CD4-positive, alpha-beta memory T cell (primary cell): ENCODE measurements at regions of chrX and their contacts with region 1.

Region 1: DNA sequence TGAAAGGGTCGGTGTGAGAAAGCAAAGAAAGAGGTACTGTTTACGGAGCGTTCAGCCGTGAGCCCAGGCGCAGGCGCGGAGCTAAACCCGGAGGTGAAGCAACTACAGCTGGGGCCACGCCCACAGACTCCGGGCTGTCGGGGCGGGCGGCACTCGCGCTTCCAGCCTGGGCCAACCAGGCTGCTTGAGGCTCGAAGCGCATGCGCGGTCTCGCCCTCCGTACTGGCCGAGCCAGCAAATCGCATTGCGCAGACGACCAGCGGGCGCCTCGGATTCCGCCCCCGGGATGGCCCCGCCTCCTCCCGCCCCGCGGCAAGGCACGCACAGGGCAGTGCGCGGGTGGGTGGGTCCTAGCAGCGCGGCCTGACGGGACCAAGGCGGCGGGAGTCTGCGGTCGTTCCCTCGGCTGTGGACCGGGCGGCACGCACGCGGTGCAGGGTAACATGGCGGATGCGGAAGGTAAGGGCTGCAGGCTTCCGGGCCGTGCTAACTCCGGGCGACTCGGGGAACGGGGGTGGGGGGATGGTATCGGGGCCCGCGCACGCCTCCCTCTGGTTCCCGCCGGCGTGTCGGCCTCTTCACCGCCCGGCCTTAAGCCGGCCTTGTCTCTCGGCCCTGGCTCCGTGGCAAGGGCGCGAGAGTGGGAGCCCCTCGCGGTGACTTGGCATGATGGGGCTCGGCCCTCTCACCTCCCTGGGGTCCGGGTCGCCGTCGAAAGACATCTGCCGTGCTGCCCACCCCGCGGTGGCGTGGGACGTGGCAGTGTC is at the start of gene DKC1:
- DNase-seq: peak; percentile 91 to 96 (median 95)
- H3K4me3 ChIP-seq: peak within 1 kb of the TSS; percentile 60 to 61
- H3K4me3 Mint-ChIP-seq: peak within 1 kb of the TSS; percentile 84 to 93 (median 88)
- H3K27ac ChIP-seq: peak within 1 kb of the TSS; percentile 71
- H3K27ac Mint-ChIP-seq: peak within 1 kb of the TSS; percentile 90 to 96 (median 94)
- H3K4me1 ChIP-seq: peaks cover 18% of the 10 kb centered on the region
- H3K4me1 Mint-ChIP-seq: peaks cover 10 to 25% (median 18%) of the 10 kb centered on the region in 4 donors
- H3K27me3 ChIP-seq: no peaks in the 10 kb centered on the region
- H3K27me3 Mint-ChIP-seq: no peaks in the 10 kb centered on the region
- total RNA-seq, gene DKC1: 60.0 to 63.9 TPM

Region 2: GRCh38 chrX:154384284-154384892 is 378.3 kb before region 1 on chrX:
- CTCF ChIA-PET with region 1: no interaction called
- POLR2A ChIA-PET with region 1: no interaction called
- intact Hi-C with region 1: no loop called
- DNase-seq: peak in 1 of 5 donors; percentile 13
- H3K4me3 ChIP-seq: no peak overlapping the region
- H3K4me3 Mint-ChIP-seq: peak overlapping the region in 1 of 8 donors; percentile 48
- H3K27ac ChIP-seq: no peak overlapping the region
- H3K27ac Mint-ChIP-seq: peak overlapping the region in 6 of 7 donors; percentile 29 to 87 (median 78)
- H3K4me1 ChIP-seq: peaks cover 12% of the 10 kb centered on the region
- H3K4me1 Mint-ChIP-seq: peaks cover 3 to 17% (median 7%) of the 10 kb centered on the region in 4 donors
- H3K27me3 ChIP-seq: no peaks in the 10 kb centered on the region
- H3K27me3 Mint-ChIP-seq: no peaks in the 10 kb centered on the region

Region 3: GRCh38 chrX:154727871-154728270 is 34.8 kb before region 1 on chrX:
- CTCF ChIA-PET with region 1: no interaction called
- POLR2A ChIA-PET with region 1: interaction called, 11 read pairs
- intact Hi-C with region 1: no loop called
- DNase-seq: no peak
- H3K4me3 ChIP-seq: no peak overlapping the region
- H3K4me3 Mint-ChIP-seq: no peak overlapping the region
- H3K27ac ChIP-seq: no peak overlapping the region
- H3K27ac Mint-ChIP-seq: peak overlapping the region in 1 of 7 donors; percentile 50
- H3K4me1 ChIP-seq: peaks cover 81% of the 10 kb centered on the region
- H3K4me1 Mint-ChIP-seq: peaks cover 52 to 86% (median 76%) of the 10 kb centered on the region in 4 donors
- H3K27me3 ChIP-seq: no peaks in the 10 kb centered on the region
- H3K27me3 Mint-ChIP-seq: no peaks in the 10 kb centered on the region

Region 4: DNA sequence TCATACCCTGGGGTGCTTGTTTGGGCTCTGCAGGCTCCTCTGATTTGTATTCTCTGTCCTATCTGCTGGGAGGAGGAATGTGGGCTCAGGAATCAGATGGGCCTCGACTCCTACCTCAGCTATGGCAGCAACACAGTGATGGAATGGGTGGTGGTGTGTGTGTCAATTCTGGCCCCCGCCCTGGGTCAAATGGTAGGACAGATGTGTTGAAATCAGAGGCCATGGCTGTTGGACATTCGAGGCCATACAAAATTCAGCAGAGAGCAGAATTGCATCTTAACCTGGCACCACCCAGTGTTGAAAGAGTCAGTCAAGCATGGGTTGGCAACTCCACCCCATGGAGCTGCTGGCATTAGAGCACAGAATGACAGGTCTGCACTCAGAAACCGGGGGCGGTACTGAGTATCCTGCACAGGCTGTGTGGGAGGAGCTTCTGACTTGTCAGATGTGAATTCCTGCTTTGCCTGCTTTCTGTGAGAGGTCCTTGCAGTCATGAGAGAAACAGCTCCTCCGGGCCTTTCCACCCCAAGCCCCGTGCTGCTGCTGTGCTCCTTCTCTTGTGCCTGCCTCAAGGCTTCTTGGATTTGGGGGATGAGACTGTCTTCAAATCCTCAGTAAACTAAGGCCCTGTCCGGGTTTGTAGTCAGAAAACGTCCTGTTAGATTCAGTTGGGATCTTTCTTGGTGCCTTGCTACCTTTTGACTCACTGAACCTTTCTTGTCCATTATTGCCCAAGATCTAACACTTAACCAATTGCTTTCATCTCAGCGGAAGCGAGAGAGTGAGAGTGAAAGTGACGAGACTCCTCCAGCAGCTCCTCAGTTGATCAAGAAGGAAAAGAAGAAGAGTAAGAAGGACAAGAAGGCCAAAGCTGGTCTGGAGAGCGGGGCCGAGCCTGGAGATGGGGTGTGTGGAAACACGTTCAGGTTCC is 13.0 kb after region 1 on chrX:
- CTCF ChIA-PET with region 1: no interaction called
- POLR2A ChIA-PET with region 1: interaction called, 10 read pairs
- intact Hi-C with region 1: no loop called
- DNase-seq: no peak
- H3K4me3 ChIP-seq: no peak overlapping the region
- H3K4me3 Mint-ChIP-seq: peak overlapping the region in 2 of 8 donors; percentile 29 to 64
- H3K27ac ChIP-seq: no peak overlapping the region
- H3K27ac Mint-ChIP-seq: peak overlapping the region in 3 of 7 donors; percentile 43 to 78 (median 70)
- H3K4me1 ChIP-seq: peaks cover 19% of the 10 kb centered on the region
- H3K4me1 Mint-ChIP-seq: peaks cover 2 to 13% (median 7%) of the 10 kb centered on the region in 4 donors
- H3K27me3 ChIP-seq: no peaks in the 10 kb centered on the region
- H3K27me3 Mint-ChIP-seq: no peaks in the 10 kb centered on the region

Region 5: GRCh38 chrX:154804957-154805695 is 42.4 kb after region 1 on chrX and contains the start of gene MPP1:
- CTCF ChIA-PET with region 1: no interaction called
- POLR2A ChIA-PET with region 1: interaction called, 10 read pairs
- intact Hi-C with region 1: loop called (anchors 5 kb)
- DNase-seq: peak; percentile 54 to 80 (median 76)
- H3K4me3 ChIP-seq: peak within 1 kb of the TSS; percentile 23 to 57
- H3K4me3 Mint-ChIP-seq: peak within 1 kb of the TSS; percentile 75 to 87 (median 81)
- H3K27ac ChIP-seq: no peak within 1 kb of the TSS
- H3K27ac Mint-ChIP-seq: peak within 1 kb of the TSS in 4 of 7 donors; percentile 46 to 69 (median 56)
- H3K4me1 ChIP-seq: peaks cover 16% of the 10 kb centered on the region
- H3K4me1 Mint-ChIP-seq: peaks cover 8 to 17% (median 12%) of the 10 kb centered on the region in 4 donors
- H3K27me3 ChIP-seq: no peaks in the 10 kb centered on the region
- H3K27me3 Mint-ChIP-seq: peaks cover 0 to 3% of the 10 kb centered on the region in 2 donors
- total RNA-seq, gene MPP1: 11.1 to 12.6 TPM